CD8-positive, alpha-beta T cell (primary cell): ENCODE measurements at regions of chr17 and their contacts with region 1.

Region 1: DNA sequence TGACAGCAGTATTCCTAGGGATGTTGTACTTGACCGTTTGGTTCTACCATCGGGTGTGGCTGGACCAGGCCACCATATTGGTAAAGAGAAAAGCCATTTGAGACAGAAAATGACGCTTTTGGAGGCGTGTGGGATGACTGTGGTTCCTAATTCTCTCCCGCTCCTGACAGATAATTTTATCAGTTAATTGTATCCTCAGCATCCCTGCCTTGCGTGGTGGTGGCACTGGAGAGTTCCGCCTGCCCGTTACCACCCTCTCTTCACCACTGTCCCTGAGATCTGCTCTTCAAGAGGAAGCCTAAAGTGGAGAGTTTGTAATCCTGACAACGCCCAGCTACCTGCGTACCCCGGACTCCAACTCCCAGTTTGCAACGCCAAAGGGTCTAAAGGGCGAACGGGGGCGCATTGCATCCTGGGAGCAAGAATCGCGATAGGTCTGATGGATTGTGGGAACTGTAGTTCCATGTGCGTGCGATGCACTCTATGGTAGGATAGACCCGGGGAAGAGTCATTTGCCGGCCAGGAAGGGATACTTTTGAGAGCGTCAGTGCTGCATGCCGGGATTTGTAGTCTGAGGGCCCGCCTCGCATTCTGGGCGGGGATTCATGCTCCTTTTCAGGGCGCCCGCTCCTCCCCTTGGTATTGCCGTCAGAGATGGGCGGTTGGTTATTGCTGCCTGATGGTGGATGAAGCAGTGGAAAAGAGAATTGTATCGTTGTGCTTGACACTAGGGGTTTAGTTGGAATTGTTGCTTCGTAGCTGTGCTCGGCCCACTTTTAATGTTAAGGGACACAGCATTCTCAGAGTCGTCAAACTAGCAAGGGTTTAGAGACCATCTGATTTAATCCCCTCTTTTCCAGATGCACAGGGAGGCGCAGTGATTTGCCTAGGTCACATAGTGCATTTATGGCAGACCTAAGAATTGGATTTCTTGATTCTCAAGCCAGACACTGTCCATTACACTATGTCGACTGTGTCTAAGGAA is 965 bp upstream of the PHF12 start:
- DNase-seq: peak; percentile 87 to 100 (median 94)
- ATAC-seq: peak; percentile 68
- H3K4me3 ChIP-seq: peak overlapping the region; percentile 69 to 77
- H3K4me3 Mint-ChIP-seq: no peak overlapping the region
- H3K27ac ChIP-seq: peak overlapping the region; percentile 85 to 97
- H3K27ac Mint-ChIP-seq: no peak overlapping the region
- H3K4me1 ChIP-seq: peaks cover 28% of the 10 kb centered on the region
- H3K4me1 Mint-ChIP-seq: peaks cover 14% of the 10 kb centered on the region
- H3K27me3 ChIP-seq: no peaks in the 10 kb centered on the region
- H3K27me3 Mint-ChIP-seq: no peaks in the 10 kb centered on the region
- CTCF ChIP-seq: no peak

Region 2: GRCh38 chr17:28494445-28495188 is 457.7 kb before region 1 on chr17:
- CTCF ChIA-PET with region 1: no interaction called
- POLR2A ChIA-PET with region 1: no interaction called
- intact Hi-C with region 1: no loop called
- DNase-seq: peak; percentile 60 to 88 (median 79)
- ATAC-seq: peak; percentile 91
- H3K4me3 ChIP-seq: no peak overlapping the region
- H3K4me3 Mint-ChIP-seq: no peak overlapping the region
- H3K27ac ChIP-seq: no peak overlapping the region
- H3K27ac Mint-ChIP-seq: no peak overlapping the region
- H3K4me1 ChIP-seq: no peaks in the 10 kb centered on the region
- H3K4me1 Mint-ChIP-seq: no peaks in the 10 kb centered on the region
- H3K27me3 ChIP-seq: no peaks in the 10 kb centered on the region
- H3K27me3 Mint-ChIP-seq: peaks cover 4% of the 10 kb centered on the region
- CTCF ChIP-seq: peak; percentile 71

Region 3: GRCh38 chr17:28644985-28645939 is 307.0 kb before region 1 on chr17 and contains the start of gene BLTP2:
- CTCF ChIA-PET with region 1: interaction called, 4 read pairs
- POLR2A ChIA-PET with region 1: interaction called, 6 read pairs
- intact Hi-C with region 1: loop called (anchors 1 kb)
- DNase-seq: peak; percentile 91 to 98 (median 96)
- ATAC-seq: peak; percentile 98
- H3K4me3 ChIP-seq: peak within 1 kb of the TSS; percentile 81 to 82
- H3K4me3 Mint-ChIP-seq: peak within 1 kb of the TSS; percentile 90
- H3K27ac ChIP-seq: peak within 1 kb of the TSS; percentile 75 to 89
- H3K27ac Mint-ChIP-seq: peak within 1 kb of the TSS; percentile 95
- H3K4me1 ChIP-seq: peaks cover 34% of the 10 kb centered on the region
- H3K4me1 Mint-ChIP-seq: peaks cover 46% of the 10 kb centered on the region
- H3K27me3 ChIP-seq: no peaks in the 10 kb centered on the region
- H3K27me3 Mint-ChIP-seq: no peaks in the 10 kb centered on the region
- CTCF ChIP-seq: no peak
- total RNA-seq, gene BLTP2: 136 to 148 TPM

Region 4: GRCh38 chr17:28763804-28764266 is 188.4 kb before region 1 on chr17:
- CTCF ChIA-PET with region 1: interaction called, 40 read pairs
- POLR2A ChIA-PET with region 1: interaction called, 3 read pairs
- intact Hi-C with region 1: loop called in 1 of 2 experiments (anchors 1 kb)
- DNase-seq: peak; percentile 58 to 84 (median 76)
- ATAC-seq: peak; percentile 95
- H3K4me3 ChIP-seq: no peak overlapping the region
- H3K4me3 Mint-ChIP-seq: no peak overlapping the region
- H3K27ac ChIP-seq: no peak overlapping the region
- H3K27ac Mint-ChIP-seq: no peak overlapping the region
- H3K4me1 ChIP-seq: no peaks in the 10 kb centered on the region
- H3K4me1 Mint-ChIP-seq: peaks cover 6% of the 10 kb centered on the region
- H3K27me3 ChIP-seq: no peaks in the 10 kb centered on the region
- H3K27me3 Mint-ChIP-seq: no peaks in the 10 kb centered on the region
- CTCF ChIP-seq: peak; percentile 92

Region 5: DNA sequence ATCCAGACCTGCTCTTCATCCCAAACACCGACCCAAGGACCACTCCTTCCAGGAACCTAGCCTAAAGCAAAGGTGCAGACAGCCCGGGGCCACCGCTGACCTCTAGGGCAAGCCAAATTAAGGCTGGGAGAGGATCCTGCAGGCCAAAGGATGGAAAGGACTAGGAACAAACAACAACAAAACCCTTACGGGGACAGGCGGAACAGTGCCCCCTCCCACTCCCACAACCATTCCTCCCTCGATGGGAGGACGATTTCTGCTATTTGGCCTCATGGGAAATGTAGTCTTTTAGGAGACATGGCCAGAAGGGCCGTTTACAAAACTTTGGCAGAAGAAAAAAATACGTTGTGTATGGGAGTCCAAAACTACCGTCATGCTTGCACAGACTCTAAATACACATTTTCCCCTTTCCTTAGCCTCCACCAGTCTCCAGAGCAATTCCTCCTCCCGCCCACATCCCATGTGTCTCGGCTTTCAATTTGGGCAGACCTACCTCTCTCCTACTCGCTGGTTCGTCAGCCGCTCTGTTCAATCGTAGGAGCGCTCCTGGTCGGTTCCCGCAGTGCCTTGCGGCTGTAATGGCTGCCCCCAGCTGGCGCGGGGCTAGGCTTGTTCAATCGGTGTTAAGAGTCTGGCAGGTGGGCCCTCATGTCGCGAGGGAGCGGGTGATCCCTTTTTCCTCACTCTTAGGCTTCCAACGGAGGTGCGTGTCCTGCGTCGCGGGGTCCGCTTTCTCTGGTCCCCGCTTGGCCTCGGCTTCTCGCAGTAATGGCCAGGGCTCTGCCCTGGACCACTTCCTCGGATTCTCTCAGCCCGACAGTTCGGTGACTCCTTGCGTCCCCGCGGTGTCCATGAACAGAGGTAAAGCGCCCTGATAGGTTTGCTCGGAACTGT is 97.6 kb before region 1 on chr17 and contains the start of gene ERAL1:
- CTCF ChIA-PET with region 1: interaction called, 14 read pairs
- POLR2A ChIA-PET with region 1: interaction called, 5 read pairs
- intact Hi-C with region 1: loop called (anchors 1 kb)
- DNase-seq: peak; percentile 62 to 90 (median 84)
- ATAC-seq: peak; percentile 99
- H3K4me3 ChIP-seq: peak within 1 kb of the TSS; percentile 75 to 96
- H3K4me3 Mint-ChIP-seq: peak within 1 kb of the TSS; percentile 95
- H3K27ac ChIP-seq: peak within 1 kb of the TSS; percentile 61 to 74
- H3K27ac Mint-ChIP-seq: peak within 1 kb of the TSS; percentile 90
- H3K4me1 ChIP-seq: peaks cover 12% of the 10 kb centered on the region
- H3K4me1 Mint-ChIP-seq: peaks cover 18% of the 10 kb centered on the region
- H3K27me3 ChIP-seq: no peaks in the 10 kb centered on the region
- H3K27me3 Mint-ChIP-seq: no peaks in the 10 kb centered on the region
- CTCF ChIP-seq: no peak
- total RNA-seq, gene ERAL1: 20.0 to 21.2 TPM

Region 6: DNA sequence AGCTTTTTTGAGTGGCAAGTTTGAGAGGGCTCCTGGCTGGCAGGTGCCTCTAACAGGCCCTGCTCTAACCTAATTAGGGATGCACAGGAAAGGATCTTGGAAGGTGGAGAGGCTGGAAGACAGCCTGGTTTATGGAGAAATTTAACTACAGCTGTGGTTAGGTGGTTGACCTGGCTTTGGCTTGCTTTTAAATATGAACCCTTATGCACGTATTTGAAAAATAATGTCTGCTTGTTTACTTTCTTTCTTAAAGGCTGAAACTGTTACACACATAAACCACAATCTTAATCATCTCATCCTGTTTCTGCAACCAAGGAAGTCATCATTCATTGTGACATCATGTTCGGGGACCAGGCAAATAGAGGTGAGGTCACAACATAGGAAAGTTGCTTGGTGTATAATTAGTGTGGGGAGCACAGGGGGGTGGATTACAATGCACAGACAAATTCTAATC is 26.3 kb before region 1 on chr17:
- CTCF ChIA-PET with region 1: interaction called, 26 read pairs
- POLR2A ChIA-PET with region 1: interaction called, 71 read pairs
- intact Hi-C with region 1: loop called (anchors 1 kb)
- DNase-seq: peak; percentile 31 to 96 (median 58)
- ATAC-seq: peak; percentile 90
- H3K4me3 ChIP-seq: no peak overlapping the region
- H3K4me3 Mint-ChIP-seq: peak overlapping the region; percentile 32
- H3K27ac ChIP-seq: peak overlapping the region; percentile 87 to 96
- H3K27ac Mint-ChIP-seq: peak overlapping the region; percentile 97
- H3K4me1 ChIP-seq: peaks cover 35% of the 10 kb centered on the region
- H3K4me1 Mint-ChIP-seq: peaks cover 60% of the 10 kb centered on the region
- H3K27me3 ChIP-seq: no peaks in the 10 kb centered on the region
- H3K27me3 Mint-ChIP-seq: no peaks in the 10 kb centered on the region
- CTCF ChIP-seq: no peak

Region 7: DNA sequence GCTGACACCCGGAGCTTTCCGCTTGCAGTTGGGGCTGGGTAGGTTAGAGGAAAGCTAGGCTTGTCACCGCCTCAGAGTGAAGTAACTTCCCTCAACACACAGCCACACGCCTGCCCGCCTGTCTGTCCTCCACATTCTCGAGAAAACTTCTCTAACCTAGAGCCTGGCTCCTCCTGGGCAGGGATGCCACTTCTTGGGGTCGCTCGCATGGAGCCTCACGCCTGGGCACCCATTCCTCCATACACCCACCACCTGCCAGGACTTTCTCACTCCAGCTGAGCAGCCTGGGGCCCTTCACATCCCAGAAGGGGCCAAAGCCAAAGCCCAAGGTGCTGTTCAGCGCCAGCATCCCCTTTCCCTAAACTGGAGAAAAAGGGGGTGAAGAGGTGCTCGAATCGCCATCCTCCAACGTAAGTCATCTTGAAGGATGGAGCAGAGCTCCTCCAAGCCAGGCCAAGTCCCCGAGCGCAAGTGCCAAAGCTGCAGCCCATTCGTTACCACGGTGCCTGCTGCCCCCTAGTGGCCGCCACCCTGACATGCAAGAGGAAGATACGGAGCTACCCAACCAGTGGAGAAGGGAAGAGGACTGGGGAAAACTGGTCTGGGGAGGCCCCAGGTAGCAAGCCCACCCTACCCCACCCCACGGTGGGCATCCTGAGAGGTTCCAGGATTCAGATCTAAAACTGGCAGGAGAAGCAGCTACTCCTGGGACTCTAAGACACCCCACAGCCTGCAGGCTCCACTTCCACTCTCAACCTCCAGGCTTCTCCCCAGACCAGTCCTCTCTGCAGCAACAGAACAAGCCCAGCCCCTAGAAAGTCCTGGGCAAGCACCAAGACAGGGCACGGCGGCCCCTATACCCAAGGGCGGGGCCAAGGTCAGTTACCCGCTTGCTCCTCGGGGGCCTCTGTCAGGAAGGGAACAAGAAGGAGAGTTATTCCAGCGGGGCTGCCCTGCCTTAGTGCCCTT is 164.8 kb after region 1 on chr17:
- CTCF ChIA-PET with region 1: interaction called, 368 read pairs
- POLR2A ChIA-PET with region 1: interaction called, 3 read pairs
- intact Hi-C with region 1: no loop called
- DNase-seq: peak; percentile 58 to 86 (median 80)
- ATAC-seq: peak; percentile 90
- H3K4me3 ChIP-seq: no peak overlapping the region
- H3K4me3 Mint-ChIP-seq: no peak overlapping the region
- H3K27ac ChIP-seq: no peak overlapping the region
- H3K27ac Mint-ChIP-seq: no peak overlapping the region
- H3K4me1 ChIP-seq: peaks cover 3% of the 10 kb centered on the region
- H3K4me1 Mint-ChIP-seq: peaks cover 2% of the 10 kb centered on the region
- H3K27me3 ChIP-seq: no peaks in the 10 kb centered on the region
- H3K27me3 Mint-ChIP-seq: no peaks in the 10 kb centered on the region
- CTCF ChIP-seq: peak; percentile 94

Region 8: GRCh38 chr17:29225396-29225795 is 273.1 kb after region 1 on chr17:
- CTCF ChIA-PET with region 1: no interaction called
- POLR2A ChIA-PET with region 1: no interaction called
- intact Hi-C with region 1: no loop called
- DNase-seq: no peak
- ATAC-seq: no peak
- H3K4me3 ChIP-seq: no peak overlapping the region
- H3K4me3 Mint-ChIP-seq: no peak overlapping the region
- H3K27ac ChIP-seq: no peak overlapping the region
- H3K27ac Mint-ChIP-seq: no peak overlapping the region
- H3K4me1 ChIP-seq: no peaks in the 10 kb centered on the region
- H3K4me1 Mint-ChIP-seq: no peaks in the 10 kb centered on the region
- H3K27me3 ChIP-seq: no peaks in the 10 kb centered on the region
- H3K27me3 Mint-ChIP-seq: peaks cover 2% of the 10 kb centered on the region
- CTCF ChIP-seq: no peak